ENCODE measurements at regions of chrX and their contacts with region 1.

Region 1: GRCh38 chrX:55074851-55075467 is at the start of gene PAGE2B:
- DNase-seq: peak; percentile 74
- total RNA-seq, gene PAGE2B: not detected

Region 2: DNA sequence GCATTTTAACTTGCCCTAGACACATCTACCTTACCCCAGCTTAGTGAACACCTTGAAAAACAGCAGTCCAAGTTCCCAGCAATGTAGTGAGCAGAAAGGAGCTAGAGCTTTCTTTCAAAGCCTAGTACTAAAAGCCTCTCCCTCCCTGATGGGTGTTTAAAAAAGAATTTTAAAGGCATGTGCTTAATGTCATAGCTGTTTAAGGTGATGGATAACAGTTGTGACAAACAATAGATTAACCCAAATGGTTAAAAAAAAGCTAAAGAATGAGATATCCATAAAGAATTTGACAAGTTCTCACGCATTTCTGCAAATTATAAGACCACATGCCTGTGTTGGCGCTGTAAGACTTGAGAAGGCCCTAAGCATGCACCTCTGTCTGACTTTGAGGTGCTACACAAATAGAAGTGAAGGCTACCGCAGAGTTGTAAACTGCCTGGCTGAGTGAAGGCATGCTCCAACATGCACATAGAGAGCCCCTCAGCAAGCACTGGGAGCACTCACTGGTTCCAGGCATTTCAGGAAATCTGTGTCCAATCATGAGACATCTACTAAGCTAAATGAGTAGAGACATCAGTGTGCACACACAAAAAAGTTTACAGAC is 1124.7 kb before region 1 on chrX:
- intact Hi-C with region 1: loop called in 1 of 2 experiments (anchors 5 kb)
- DNase-seq: no peak

Region 3: DNA sequence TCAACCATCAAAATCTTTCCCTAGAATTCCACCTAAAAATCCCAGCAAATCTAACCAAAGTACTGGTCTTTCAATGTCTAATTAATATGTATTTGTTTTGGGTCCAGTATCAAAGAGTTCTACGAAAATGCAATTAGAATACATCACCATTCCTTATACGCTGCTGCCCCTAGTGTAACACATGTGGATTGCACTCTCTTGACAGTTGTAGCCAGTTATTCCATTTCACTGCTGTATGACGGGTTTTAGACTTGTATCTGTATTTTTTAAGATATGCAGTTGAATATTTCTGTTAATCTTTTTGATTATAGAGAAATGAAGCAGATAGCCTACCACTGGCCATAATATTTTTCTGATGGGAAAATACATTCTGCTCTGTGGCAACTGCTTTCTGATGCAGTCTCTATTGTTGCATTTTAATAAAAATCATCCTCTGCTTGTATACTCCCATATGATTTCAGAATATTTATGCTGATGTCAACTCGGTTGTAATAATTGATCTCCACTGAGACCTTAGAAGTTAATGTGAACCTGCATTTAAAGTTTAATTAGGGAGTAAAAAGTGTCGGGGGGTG is 17.2 kb before region 1 on chrX:
- intact Hi-C with region 1: no loop called
- DNase-seq: no peak

Measured in posterior vena cava (tissue), 2 donors.